ENCODE measurements at regions of chr3 and their contacts with region 1.

Region 1: GRCh38 chr3:172476347-172476746 is 28.1 kb upstream of the GHSR start:
- DNase-seq: no peak
- H3K27ac ChIP-seq: no peak overlapping the region
- CTCF ChIP-seq: no peak

Region 2: DNA sequence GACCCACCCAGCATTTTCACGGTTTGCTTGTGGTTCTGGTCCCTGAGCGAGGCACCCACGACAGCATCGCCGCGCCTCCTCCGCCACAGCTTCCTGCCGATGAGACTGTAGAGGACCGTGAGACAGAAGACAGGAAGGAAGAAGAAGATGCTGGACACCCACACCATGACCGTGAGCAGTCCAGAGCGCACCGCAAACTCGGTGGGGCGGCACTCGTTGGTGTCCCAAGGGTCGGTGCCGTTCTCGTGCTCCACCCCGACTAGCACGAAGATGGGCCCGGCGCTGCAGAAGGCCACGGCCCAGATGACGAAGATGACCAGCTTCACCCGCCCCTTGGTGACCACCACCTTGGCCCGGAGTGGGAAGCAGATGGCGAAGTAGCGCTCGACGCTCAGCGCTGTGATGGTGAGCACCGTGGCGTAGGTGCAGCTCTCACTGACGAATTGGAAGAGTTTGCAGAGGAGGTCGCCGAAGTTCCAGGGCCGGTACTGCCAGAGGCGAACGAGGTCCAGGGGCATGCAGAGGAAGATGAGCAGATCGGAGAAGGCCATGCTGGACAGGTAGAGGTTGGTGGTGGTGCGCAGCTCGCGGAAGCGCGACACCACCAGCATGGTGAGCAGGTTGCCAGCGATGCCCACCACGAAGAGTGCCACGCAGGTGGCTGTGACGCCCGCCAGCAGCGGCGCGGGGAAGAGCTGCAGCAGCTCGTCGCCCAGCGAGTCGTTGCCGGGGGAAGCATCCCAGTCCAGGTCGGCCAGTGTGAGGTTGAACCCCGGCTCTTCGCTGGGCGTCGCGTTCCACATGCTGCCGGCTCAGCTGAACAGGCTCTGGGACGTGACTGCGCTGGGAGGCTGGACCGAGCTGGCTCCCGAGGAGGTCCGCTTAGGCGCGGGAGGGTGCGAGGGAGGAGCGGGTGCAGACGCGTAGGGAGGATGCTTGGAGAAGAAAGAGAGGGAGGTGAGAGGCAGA is 28.5 kb before region 1 on chr3 and contains the start of gene GHSR:
- CTCF ChIA-PET with region 1: interaction called, 10 read pairs
- POLR2A ChIA-PET with region 1: no interaction called
- DNase-seq: no peak
- H3K27ac ChIP-seq: no peak within 1 kb of the TSS
- CTCF ChIP-seq: no peak

Region 3: GRCh38 chr3:172595641-172596393 is 119.5 kb after region 1 on chr3:
- CTCF ChIA-PET with region 1: interaction called, 10 read pairs
- POLR2A ChIA-PET with region 1: no interaction called
- DNase-seq: peak; percentile 72
- H3K27ac ChIP-seq: no peak overlapping the region
- CTCF ChIP-seq: peak; percentile 92